Mammary epithelial cell (primary cell): ENCODE measurements at regions of chr3 and their contacts with region 1.

Region 1: GRCh38 chr3:14031271-14031670 is 93.4 kb downstream of the CHCHD4 start:
- DNase-seq: peak; percentile 9
- H3K4me3 ChIP-seq: no peak overlapping the region
- H3K27ac ChIP-seq: no peak overlapping the region
- H3K4me1 ChIP-seq: no peaks in the 10 kb centered on the region
- H3K27me3 ChIP-seq: no peaks in the 10 kb centered on the region
- CTCF ChIP-seq: no peak

Region 2: GRCh38 chr3:13972679-13973379 is 58.4 kb before region 1 on chr3:
- CTCF ChIA-PET with region 1: no interaction called
- dilution Hi-C with region 1: loop called (anchors 5 kb)
- in situ Hi-C with region 1: no loop called
- intact Hi-C with region 1: no loop called
- DNase-seq: peak; percentile 26
- H3K4me3 ChIP-seq: no peak overlapping the region
- H3K27ac ChIP-seq: no peak overlapping the region
- H3K4me1 ChIP-seq: no peaks in the 10 kb centered on the region
- H3K27me3 ChIP-seq: no peaks in the 10 kb centered on the region
- CTCF ChIP-seq: no peak

Region 3: GRCh38 chr3:14064910-14065309 is 33.6 kb after region 1 on chr3:
- CTCF ChIA-PET with region 1: no interaction called
- dilution Hi-C with region 1: loop called (anchors 5 kb)
- in situ Hi-C with region 1: no loop called
- intact Hi-C with region 1: no loop called
- DNase-seq: no peak
- H3K4me3 ChIP-seq: no peak overlapping the region
- H3K27ac ChIP-seq: no peak overlapping the region
- H3K4me1 ChIP-seq: no peaks in the 10 kb centered on the region
- H3K27me3 ChIP-seq: no peaks in the 10 kb centered on the region
- CTCF ChIP-seq: no peak